ENCODE measurements at regions of chr12 and their contacts with region 1.

Region 1: DNA sequence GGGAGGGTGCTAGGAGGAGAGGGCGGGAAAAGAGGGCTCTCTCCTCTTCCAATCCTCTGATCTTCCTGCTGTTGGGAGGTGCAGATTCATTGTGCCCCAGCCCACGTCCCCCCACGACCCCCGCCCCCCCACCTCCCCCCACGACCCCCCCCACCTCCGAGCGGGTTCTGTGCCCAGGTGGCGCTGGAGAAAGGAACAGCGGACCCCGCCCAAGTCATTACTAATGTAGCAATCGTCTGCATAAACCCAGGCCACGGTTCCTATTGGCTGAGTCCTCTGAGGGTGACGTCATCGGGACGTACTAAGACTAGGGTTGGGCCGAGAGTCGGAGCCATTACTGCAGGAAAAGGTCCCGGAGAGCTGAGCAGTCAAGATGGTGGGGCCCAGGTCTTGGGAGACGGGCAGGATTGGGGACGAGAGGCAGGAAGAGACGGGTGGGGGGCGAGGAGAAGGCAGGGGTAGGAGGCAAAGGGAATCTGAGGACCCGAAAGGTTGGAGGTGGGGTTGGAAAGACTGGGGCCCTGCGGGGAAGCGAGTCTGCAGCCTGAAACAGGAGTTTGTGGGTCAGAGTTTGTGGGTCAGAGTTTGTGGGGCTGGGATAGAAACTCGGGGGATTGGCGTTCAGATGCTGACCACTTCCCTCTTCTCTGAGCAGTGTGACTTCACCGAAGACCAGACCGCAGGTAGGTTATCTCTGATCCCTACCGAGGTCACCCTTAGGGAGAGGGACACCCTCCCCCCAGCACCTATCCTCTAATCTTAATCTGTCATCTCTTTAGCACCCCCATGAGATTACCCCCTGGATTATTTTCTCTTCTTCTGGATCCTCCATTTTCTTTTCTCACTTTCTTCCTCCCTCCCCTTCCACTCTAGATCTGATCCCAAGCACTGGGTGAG is at the start of gene MYL6:
- DNase-seq: peak; percentile 96 to 99
- ATAC-seq: peak; percentile 82
- total RNA-seq, gene MYL6: 1,832 to 2,224 TPM

Region 2: GRCh38 chr12:55446326-55446725 is 712.0 kb before region 1 on chr12:
- intact Hi-C with region 1: no loop called
- DNase-seq: no peak
- ATAC-seq: no peak

Region 3: GRCh38 chr12:56127888-56128669 is 30.2 kb before region 1 on chr12 and contains the start of gene ESYT1:
- intact Hi-C with region 1: loop called in 1 of 2 experiments (anchors 5 kb)
- DNase-seq: peak; percentile 97 to 100
- ATAC-seq: peak; percentile 81
- total RNA-seq, gene ESYT1: 44.4 to 48.6 TPM

Region 4: DNA sequence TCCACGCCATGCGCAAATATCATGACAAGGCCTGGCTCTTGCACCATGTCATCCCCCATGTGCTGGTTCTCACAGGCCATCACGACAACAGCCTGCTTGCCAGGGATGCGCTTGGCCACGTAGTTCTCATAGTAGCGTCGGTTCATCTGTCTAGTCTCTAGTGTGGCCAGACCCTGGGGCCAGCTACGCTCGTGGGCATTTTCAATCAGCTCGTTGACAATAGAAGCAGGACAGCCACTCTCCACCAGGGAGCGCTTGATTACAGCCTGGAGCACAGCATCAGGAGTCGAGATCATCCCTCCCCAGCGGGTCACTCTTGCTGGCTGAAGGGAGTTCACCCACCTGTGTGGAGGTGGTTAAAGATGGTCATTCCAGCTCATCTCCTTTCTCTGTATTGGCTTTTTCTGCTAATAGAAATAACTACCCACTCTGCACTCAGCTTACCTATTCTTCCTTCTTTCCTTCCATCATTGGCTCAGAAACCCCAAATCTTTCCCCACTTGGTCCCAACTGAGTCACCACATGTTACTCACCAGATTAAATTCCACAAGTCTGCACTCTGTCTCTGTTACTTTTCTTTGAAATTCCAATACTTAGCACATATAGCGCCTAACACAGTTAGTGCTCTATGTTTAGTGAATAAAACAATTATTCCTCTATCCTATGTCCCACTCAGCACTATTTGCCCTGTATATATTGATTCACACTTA is 48.3 kb after region 1 on chr12:
- intact Hi-C with region 1: no loop called
- DNase-seq: peak; percentile 51 to 75
- ATAC-seq: peak; percentile 86

Measured in left colon (tissue), 2 donors.